A673 (cell line): ENCODE measurements at regions of chr22 and their contacts with region 1.

Region 1: GRCh38 chr22:39170825-39171622 is 18.5 kb upstream of the CBX7 start:
- DNase-seq: peak; percentile 84
- H3K4me3 ChIP-seq: no peak overlapping the region
- H3K27ac ChIP-seq: no peak overlapping the region
- H3K4me1 ChIP-seq: peaks cover 20% of the 10 kb centered on the region
- H3K27me3 ChIP-seq: no peaks in the 10 kb centered on the region
- CTCF ChIP-seq: peak; percentile 94

Region 2: GRCh38 chr22:39197396-39197977 is 26.5 kb after region 1 on chr22:
- CTCF ChIA-PET with region 1: no interaction called
- POLR2A ChIA-PET with region 1: no interaction called
- intact Hi-C with region 1: no loop called
- DNase-seq: no peak
- H3K4me3 ChIP-seq: no peak overlapping the region
- H3K27ac ChIP-seq: no peak overlapping the region
- H3K4me1 ChIP-seq: no peaks in the 10 kb centered on the region
- H3K27me3 ChIP-seq: no peaks in the 10 kb centered on the region
- CTCF ChIP-seq: no peak

Region 3: DNA sequence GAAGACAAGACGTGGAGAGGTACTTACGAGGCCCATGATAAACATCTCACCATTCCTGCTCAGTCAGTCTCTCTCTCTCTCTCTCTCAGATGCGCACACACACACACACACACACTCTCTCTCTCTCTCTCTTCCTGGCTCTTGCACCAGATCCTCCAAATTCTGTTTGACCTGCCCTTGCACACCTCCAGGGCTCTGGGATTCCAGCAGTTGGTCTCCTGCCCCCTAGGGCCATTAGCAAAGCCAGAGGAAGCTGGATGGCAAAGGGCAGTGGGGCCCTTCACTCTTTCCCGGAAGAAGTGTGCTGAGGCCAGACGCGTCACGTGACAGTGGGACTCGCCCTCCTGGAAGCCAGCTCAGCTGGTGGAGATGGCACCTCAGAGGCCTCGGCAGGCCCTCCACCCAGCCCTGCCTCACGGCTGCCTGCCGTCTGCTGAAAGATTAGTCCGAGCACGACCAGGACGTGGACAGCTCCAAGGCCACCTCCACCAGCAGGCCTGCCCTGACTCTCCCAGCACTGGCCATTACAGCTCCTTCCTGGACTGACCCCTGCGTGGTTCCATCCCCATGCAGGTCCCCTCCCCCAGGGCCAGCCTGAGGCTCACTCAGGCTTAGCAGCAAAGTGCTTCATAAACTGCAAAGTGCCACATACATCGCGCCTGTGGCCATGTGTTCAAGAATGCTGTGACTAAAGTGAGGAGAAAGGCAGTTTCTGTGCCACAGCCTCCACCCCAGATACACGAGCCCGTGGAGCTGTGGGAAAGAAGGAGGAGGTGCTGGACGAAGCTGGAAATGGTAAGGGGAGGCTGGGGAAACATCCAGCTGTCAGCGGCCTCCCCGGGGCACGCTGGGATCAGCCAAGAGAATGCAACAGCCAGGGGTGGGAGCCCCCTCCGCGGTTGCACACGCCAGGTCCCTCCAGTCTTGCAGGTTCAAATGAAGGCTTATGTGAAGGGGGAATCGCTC is 70.1 kb after region 1 on chr22:
- CTCF ChIA-PET with region 1: no interaction called
- POLR2A ChIA-PET with region 1: no interaction called
- intact Hi-C with region 1: loop called (anchors 10 kb)
- DNase-seq: no peak
- H3K4me3 ChIP-seq: no peak overlapping the region
- H3K27ac ChIP-seq: no peak overlapping the region
- H3K4me1 ChIP-seq: peaks cover 29% of the 10 kb centered on the region
- H3K27me3 ChIP-seq: peaks cover 44% of the 10 kb centered on the region
- CTCF ChIP-seq: no peak

Region 4: GRCh38 chr22:39306581-39307361 is 135.7 kb after region 1 on chr22:
- CTCF ChIA-PET with region 1: interaction called, 15 read pairs
- POLR2A ChIA-PET with region 1: interaction called, 4 read pairs
- intact Hi-C with region 1: loop called (anchors 1 kb)
- DNase-seq: peak; percentile 62
- H3K4me3 ChIP-seq: no peak overlapping the region
- H3K27ac ChIP-seq: no peak overlapping the region
- H3K4me1 ChIP-seq: peaks cover 18% of the 10 kb centered on the region
- H3K27me3 ChIP-seq: no peaks in the 10 kb centered on the region
- CTCF ChIP-seq: peak; percentile 70

Region 5: GRCh38 chr22:39661842-39662676 is 491.0 kb after region 1 on chr22:
- CTCF ChIA-PET with region 1: no interaction called
- POLR2A ChIA-PET with region 1: no interaction called
- intact Hi-C with region 1: no loop called
- DNase-seq: peak; percentile 17
- H3K4me3 ChIP-seq: no peak overlapping the region
- H3K27ac ChIP-seq: no peak overlapping the region
- H3K4me1 ChIP-seq: peaks cover 11% of the 10 kb centered on the region
- H3K27me3 ChIP-seq: no peaks in the 10 kb centered on the region
- CTCF ChIP-seq: no peak